SK-MEL-5 (cell line): ENCODE measurements at regions of chr11 and their contacts with region 1.

Region 1: GRCh38 chr11:83071567-83072349 is at the start of gene RAB30:
- DNase-seq: peak; percentile 99
- total RNA-seq, gene RAB30: 3.6 and 4.7 TPM in 2 replicates

Region 2: DNA sequence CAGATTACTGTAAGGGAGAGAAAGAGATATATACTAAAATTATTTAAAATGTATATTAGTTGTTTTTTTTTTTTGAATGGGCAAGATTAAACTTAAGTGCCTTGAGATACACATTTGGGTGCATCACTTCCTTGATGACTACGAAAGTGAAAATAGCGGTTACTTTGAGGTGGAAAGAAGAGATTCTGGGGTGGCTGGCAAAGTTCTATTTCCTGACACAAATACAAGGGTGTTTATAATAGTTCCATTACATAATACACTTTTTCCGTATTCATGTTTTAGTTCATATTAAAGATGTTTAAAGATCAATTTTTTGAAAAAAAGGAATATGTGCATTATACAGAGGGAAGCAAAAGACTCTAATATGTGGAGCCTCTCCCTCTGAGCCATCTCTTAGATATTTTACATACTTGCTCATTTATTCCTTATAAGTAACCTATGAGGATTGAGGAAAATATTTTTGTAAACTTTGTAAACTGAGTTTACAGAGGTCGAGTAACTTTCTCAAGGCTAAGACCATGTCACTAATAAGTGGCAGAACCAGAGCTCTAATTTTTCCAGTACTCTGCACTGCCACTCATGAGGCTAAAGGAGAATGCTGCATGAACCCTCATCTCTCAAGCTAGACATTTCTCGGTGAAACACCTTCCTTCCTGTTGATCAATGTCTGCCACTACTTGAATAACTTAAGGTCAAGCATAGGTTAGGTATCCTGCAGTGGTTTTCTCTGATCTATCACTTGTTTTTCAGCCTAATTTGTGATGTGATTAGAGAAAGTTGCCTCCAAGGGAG is 111.6 kb before region 1 on chr11:
- in situ Hi-C with region 1: loop called (anchors 25 kb)
- DNase-seq: no peak

Region 3: GRCh38 chr11:83025267-83025720 is 46.5 kb before region 1 on chr11:
- in situ Hi-C with region 1: no loop called
- DNase-seq: peak; percentile 80